Naive thymus-derived CD4-positive, alpha-beta T cell (primary cell): ENCODE measurements at regions of chr6 and their contacts with region 1.

Region 1: DNA sequence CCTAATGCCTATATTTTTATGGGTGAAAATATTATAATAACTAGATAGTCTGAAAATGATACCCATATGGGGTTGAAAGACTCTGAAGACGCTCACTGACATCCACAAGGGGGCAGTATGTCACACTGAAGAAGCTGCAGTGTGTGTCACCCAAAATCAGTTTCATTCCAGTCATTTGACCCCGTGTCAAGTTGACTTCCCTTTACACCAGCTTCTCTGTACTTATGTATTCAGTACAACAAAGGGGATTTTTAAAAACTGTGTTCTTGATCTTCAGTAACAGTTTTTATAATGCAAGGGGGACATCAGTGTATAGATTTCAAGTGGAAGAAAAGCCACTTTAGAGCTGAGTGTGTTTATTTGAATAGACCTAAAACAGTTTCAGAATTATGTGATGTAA is 19.3 kb downstream of the FAXC start:
- DNase-seq: peak in 7 of 9 donors; percentile 20 to 52 (median 45)
- ATAC-seq: peak; percentile 79
- H3K4me3 ChIP-seq: no peak overlapping the region
- H3K4me3 Mint-ChIP-seq: peak overlapping the region in 1 of 10 donors; percentile 15
- H3K27ac ChIP-seq: no peak overlapping the region
- H3K27ac Mint-ChIP-seq: no peak overlapping the region
- H3K4me1 ChIP-seq: no peaks in the 10 kb centered on the region
- H3K4me1 Mint-ChIP-seq: peaks cover 0 to 4% (median 2%) of the 10 kb centered on the region in 7 donors
- H3K27me3 ChIP-seq: no peaks in the 10 kb centered on the region
- H3K27me3 Mint-ChIP-seq: peaks cover 0 to 13% (median 6%) of the 10 kb centered on the region in 5 donors

Region 2: DNA sequence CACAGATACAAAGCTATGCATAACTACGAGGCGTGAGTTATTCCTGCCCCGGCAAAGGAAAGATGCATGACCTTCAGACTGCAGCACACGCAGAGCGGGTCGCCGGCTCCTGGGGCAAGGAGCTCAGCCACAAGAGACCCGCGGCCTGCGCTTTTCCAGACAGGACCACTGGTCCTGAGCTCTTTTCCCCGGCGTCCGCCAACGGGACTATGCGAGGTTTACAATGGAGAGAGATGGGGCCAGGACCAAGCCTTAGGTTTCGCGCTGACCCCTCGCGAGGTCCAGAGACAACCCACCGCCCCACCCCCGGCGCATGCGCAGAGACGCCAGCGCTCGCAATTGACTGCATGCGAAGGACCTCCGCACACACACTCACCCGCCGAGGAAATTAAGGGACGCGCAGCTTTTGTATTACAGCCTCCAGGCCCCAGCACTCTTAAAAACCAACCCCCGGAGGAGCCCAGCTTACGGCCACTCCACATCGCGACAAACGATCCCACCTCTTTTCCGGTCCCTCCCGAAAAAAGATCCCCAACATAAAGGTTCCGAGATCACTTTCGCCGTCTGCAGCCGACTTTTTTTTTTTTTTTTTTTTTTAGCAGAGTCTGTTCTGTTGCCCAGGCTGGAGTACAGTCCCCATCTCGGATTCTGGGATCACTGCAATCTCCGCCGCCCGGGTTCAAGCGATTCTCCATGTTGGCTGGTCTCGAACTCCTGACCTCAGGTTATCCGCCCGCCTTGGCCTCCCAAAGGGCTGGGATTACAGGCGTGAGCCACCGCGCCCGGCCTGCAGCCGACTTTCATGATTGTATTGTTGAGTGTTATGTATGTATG is 63.8 kb after region 1 on chr6 and contains the start of gene COQ3:
- CTCF ChIA-PET with region 1: no interaction called
- POLR2A ChIA-PET with region 1: no interaction called
- intact Hi-C with region 1: loop called in 1 of 2 experiments (anchors 1 kb)
- DNase-seq: peak; percentile 48 to 79 (median 57)
- ATAC-seq: peak; percentile 65
- H3K4me3 ChIP-seq: peak within 1 kb of the TSS; percentile 77
- H3K4me3 Mint-ChIP-seq: peak within 1 kb of the TSS; percentile 89 to 97 (median 93)
- H3K27ac ChIP-seq: peak within 1 kb of the TSS; percentile 75
- H3K27ac Mint-ChIP-seq: peak within 1 kb of the TSS; percentile 72 to 95 (median 93)
- H3K4me1 ChIP-seq: peaks cover 0 to 3% of the 10 kb centered on the region in 2 donors
- H3K4me1 Mint-ChIP-seq: peaks cover 13 to 31% (median 21%) of the 10 kb centered on the region in 7 donors
- H3K27me3 ChIP-seq: no peaks in the 10 kb centered on the region
- H3K27me3 Mint-ChIP-seq: no peaks in the 10 kb centered on the region
- total RNA-seq, gene COQ3: 1.8 to 7.3 (median 4.2) TPM

Region 3: DNA sequence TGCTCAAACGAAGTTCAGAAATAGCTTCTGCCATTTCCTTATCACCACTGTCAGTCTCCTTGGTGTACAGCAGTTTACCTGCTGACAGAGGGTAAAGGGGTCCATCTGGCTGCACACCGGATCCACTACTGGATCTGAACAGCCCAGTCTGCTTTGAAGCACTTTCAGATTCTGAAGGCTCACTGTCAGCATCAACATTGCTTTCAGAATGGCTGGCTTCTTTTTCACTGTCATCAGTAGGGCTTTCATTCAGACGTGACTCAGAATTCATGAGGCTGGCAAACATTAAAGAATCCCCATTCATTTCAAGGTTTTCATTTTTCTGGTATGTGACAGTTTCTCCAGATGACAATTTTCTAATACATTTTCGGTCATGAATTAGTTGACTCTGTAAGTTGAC is 115.9 kb after region 1 on chr6:
- CTCF ChIA-PET with region 1: no interaction called
- POLR2A ChIA-PET with region 1: no interaction called
- intact Hi-C with region 1: no loop called
- DNase-seq: no peak
- ATAC-seq: no peak
- H3K4me3 ChIP-seq: no peak overlapping the region
- H3K4me3 Mint-ChIP-seq: no peak overlapping the region
- H3K27ac ChIP-seq: no peak overlapping the region
- H3K27ac Mint-ChIP-seq: no peak overlapping the region
- H3K4me1 ChIP-seq: no peaks in the 10 kb centered on the region
- H3K4me1 Mint-ChIP-seq: peaks cover 0 to 6% (median 0%) of the 10 kb centered on the region in 7 donors
- H3K27me3 ChIP-seq: no peaks in the 10 kb centered on the region
- H3K27me3 Mint-ChIP-seq: no peaks in the 10 kb centered on the region

Region 4: GRCh38 chr6:99746261-99746895 is 416.2 kb after region 1 on chr6:
- CTCF ChIA-PET with region 1: no interaction called
- POLR2A ChIA-PET with region 1: no interaction called
- intact Hi-C with region 1: loop called (anchors 1 kb)
- DNase-seq: peak in 8 of 9 donors; percentile 31 to 63 (median 48)
- ATAC-seq: peak; percentile 86
- H3K4me3 ChIP-seq: no peak overlapping the region
- H3K4me3 Mint-ChIP-seq: no peak overlapping the region
- H3K27ac ChIP-seq: no peak overlapping the region
- H3K27ac Mint-ChIP-seq: no peak overlapping the region
- H3K4me1 ChIP-seq: no peaks in the 10 kb centered on the region
- H3K4me1 Mint-ChIP-seq: no peaks in the 10 kb centered on the region
- H3K27me3 ChIP-seq: no peaks in the 10 kb centered on the region
- H3K27me3 Mint-ChIP-seq: peaks cover 20 to 43% (median 33%) of the 10 kb centered on the region in 5 donors

Region 5: GRCh38 chr6:100099189-100100074 is 769.3 kb after region 1 on chr6:
- CTCF ChIA-PET with region 1: no interaction called
- POLR2A ChIA-PET with region 1: no interaction called
- intact Hi-C with region 1: loop called in 1 of 2 experiments (anchors 5 kb)
- DNase-seq: no peak
- ATAC-seq: no peak
- H3K4me3 ChIP-seq: no peak overlapping the region
- H3K4me3 Mint-ChIP-seq: no peak overlapping the region
- H3K27ac ChIP-seq: no peak overlapping the region
- H3K27ac Mint-ChIP-seq: no peak overlapping the region
- H3K4me1 ChIP-seq: no peaks in the 10 kb centered on the region
- H3K4me1 Mint-ChIP-seq: no peaks in the 10 kb centered on the region
- H3K27me3 ChIP-seq: no peaks in the 10 kb centered on the region
- H3K27me3 Mint-ChIP-seq: peaks cover 4 to 15% (median 9%) of the 10 kb centered on the region in 5 donors